ENCODE measurements at regions of chr15 and their contacts with region 1.

Region 1: GRCh38 chr15:72312605-72313447 is 7.1 kb downstream of the CELF6 start:
- DNase-seq: peak; percentile 22 to 54 (median 43)
- ATAC-seq: peak; percentile 93
- H3K4me3 ChIP-seq: no peak overlapping the region
- H3K4me3 Mint-ChIP-seq: no peak overlapping the region
- H3K27ac ChIP-seq: no peak overlapping the region
- H3K27ac Mint-ChIP-seq: no peak overlapping the region
- H3K4me1 ChIP-seq: no peaks in the 10 kb centered on the region
- H3K4me1 Mint-ChIP-seq: peaks cover 0 to 2% (median 0%) of the 10 kb centered on the region in 7 donors
- H3K27me3 ChIP-seq: no peaks in the 10 kb centered on the region
- H3K27me3 Mint-ChIP-seq: peaks cover 0 to 7% (median 0%) of the 10 kb centered on the region in 5 donors

Region 2: DNA sequence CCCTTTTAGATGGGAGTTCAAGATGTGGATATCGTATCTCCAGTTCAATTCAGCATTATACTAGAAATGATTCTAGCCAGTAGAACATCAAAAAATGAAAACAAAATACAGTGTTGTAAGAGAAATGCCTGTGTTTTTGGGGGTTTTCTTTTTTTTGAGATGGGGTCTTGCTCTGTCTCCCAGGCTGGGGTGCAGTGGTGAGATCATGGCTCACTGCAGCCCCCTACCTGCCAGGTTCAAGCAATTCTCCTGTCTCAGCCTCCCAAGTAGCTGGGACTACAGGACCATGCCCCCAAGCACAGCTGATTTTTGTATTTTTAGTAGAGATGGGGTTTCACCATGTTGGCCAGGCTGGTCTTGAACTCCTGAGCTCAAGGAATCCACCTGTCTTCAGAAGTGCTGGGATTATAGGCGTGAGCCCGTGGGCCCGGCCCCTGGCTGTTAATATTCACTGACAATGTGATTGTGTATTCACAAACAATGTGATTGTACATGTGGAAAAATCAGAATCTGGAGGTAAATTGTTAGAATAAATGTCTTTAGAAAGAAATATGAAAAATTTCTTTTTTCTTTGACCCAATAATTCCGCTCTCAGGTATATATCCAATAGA is 220.3 kb after region 1 on chr15:
- CTCF ChIA-PET with region 1: interaction called, 15 read pairs
- POLR2A ChIA-PET with region 1: no interaction called
- intact Hi-C with region 1: loop called in 1 of 2 experiments (anchors 1 kb)
- DNase-seq: peak in 7 of 9 donors; percentile 6 to 41 (median 30)
- ATAC-seq: peak; percentile 47
- H3K4me3 ChIP-seq: no peak overlapping the region
- H3K4me3 Mint-ChIP-seq: peak overlapping the region in 1 of 10 donors; percentile 58
- H3K27ac ChIP-seq: no peak overlapping the region
- H3K27ac Mint-ChIP-seq: peak overlapping the region in 1 of 9 donors; percentile 41
- H3K4me1 ChIP-seq: peaks cover 0 to 31% of the 10 kb centered on the region in 2 donors
- H3K4me1 Mint-ChIP-seq: peaks cover 27 to 87% (median 70%) of the 10 kb centered on the region in 7 donors
- H3K27me3 ChIP-seq: no peaks in the 10 kb centered on the region
- H3K27me3 Mint-ChIP-seq: no peaks in the 10 kb centered on the region

Region 3: GRCh38 chr15:72671535-72671934 is 358.7 kb after region 1 on chr15:
- CTCF ChIA-PET with region 1: interaction called, 3 read pairs
- POLR2A ChIA-PET with region 1: no interaction called
- intact Hi-C with region 1: loop called in 1 of 2 experiments (anchors 10 kb)
- DNase-seq: no peak
- ATAC-seq: no peak
- H3K4me3 ChIP-seq: no peak overlapping the region
- H3K4me3 Mint-ChIP-seq: no peak overlapping the region
- H3K27ac ChIP-seq: no peak overlapping the region
- H3K27ac Mint-ChIP-seq: no peak overlapping the region
- H3K4me1 ChIP-seq: peaks cover 0 to 3% of the 10 kb centered on the region in 2 donors
- H3K4me1 Mint-ChIP-seq: peaks cover 0 to 10% (median 5%) of the 10 kb centered on the region in 7 donors
- H3K27me3 ChIP-seq: no peaks in the 10 kb centered on the region
- H3K27me3 Mint-ChIP-seq: peaks cover 5 to 25% (median 9%) of the 10 kb centered on the region in 5 donors

Measured in naive thymus-derived CD4-positive, alpha-beta T cell (primary cell).